Activated T-helper 1 cell treated with anti-CD3 and anti-CD28 coated beads, Interleukin-12 subunit alpha, Interleukin-12 subunit beta, Interleukin-2, Interleukin-4 antibody, amounts not matched to agents 30 ng/mL and 10 ng/mL and 1 ng/mL, durations not matched to agents 14 hours and 24 hours and 36 hours (primary cell): ENCODE measurements at regions of chr19 and their contacts with region 1.

Region 1: GRCh38 chr19:49333811-49334288 is 1.4 kb upstream of the CD37 start:
- DNase-seq: peak; percentile 70
- H3K4me3 Mint-ChIP-seq: peak overlapping the region; percentile 85
- H3K27ac Mint-ChIP-seq: peak overlapping the region; percentile 95
- H3K4me1 Mint-ChIP-seq: peaks cover 74% of the 10 kb centered on the region
- H3K27me3 Mint-ChIP-seq: no peaks in the 10 kb centered on the region

Region 2: DNA sequence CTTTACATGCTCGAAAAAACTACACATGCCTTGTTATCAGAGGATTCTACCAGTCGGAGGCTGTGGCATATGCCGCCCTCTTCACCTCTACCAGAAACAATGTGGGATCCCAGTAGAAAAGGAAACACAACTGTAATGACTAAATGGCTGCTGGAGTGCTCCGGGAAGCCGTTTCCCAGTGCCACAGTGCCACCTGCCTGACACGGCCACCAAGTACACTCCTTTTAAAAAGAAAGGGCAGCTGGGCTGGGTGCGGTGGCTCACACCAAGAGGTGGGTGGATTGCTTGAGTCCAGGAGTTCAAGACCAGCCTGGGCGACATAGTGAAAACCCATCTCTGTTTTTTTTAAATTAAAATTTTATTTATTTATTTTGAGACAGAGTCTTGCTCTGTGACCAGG is 109.0 kb before region 1 on chr19:
- intact Hi-C with region 1: loop called (anchors 2 kb)
- DNase-seq: peak; percentile 14
- H3K4me3 Mint-ChIP-seq: no peak overlapping the region
- H3K27ac Mint-ChIP-seq: no peak overlapping the region
- H3K4me1 Mint-ChIP-seq: peaks cover 7% of the 10 kb centered on the region
- H3K27me3 Mint-ChIP-seq: peaks cover 10% of the 10 kb centered on the region

Region 3: GRCh38 chr19:49363268-49364082 is 29.6 kb after region 1 on chr19 and contains the start of gene DKKL1:
- intact Hi-C with region 1: loop called (anchors 1 kb)
- DNase-seq: peak; percentile 72
- H3K4me3 Mint-ChIP-seq: no peak within 1 kb of the TSS
- H3K27ac Mint-ChIP-seq: no peak within 1 kb of the TSS
- H3K4me1 Mint-ChIP-seq: peaks cover 6% of the 10 kb centered on the region
- H3K27me3 Mint-ChIP-seq: peaks cover 32% of the 10 kb centered on the region
- total RNA-seq, gene DKKL1: not detected in 2 replicates